Head of caudate nucleus (tissue), 42 donors: ENCODE measurements at regions of chr18 and their contacts with region 1.

Region 1: DNA sequence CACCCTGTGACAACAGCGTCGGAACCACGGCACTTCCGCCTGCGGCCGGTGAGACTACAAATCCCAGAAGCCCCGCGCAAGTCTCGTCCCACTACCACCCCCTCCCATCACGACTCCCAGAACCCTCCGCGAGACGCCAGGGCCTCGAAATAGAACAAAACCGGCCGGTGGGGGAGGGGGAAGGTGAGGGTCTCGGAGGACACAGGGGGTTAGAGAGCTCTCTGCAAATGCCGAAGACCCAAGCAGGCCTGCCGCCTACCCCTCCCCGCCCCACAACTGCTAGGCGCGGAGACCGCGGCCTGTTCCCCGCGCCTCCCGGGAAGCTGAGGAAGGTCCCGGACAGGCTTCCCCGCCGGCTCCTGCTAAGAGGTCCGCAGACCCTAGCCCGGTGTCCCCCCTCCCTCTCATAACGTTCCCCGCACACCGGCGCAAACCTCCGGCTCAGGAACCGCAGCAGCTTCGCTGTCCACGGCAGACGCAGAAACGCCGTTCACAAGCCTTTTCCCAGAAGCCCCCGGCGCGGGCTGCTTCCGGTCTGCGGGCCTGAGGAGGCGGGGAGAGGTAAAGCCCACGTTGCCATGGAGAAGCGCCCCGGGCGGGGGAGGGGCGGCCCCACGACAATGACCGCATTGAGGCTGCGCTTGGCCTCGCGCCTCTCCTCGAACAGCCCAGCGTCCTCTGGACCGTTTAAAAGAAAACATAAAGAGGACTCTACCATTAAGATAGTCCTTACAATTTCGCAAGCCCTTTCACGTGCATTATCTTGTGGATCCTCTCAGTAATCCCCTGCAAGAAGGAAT is at the start of gene ZNF24:
- DNase-seq: peak; percentile 94 to 99 (median 97)

Region 2: DNA sequence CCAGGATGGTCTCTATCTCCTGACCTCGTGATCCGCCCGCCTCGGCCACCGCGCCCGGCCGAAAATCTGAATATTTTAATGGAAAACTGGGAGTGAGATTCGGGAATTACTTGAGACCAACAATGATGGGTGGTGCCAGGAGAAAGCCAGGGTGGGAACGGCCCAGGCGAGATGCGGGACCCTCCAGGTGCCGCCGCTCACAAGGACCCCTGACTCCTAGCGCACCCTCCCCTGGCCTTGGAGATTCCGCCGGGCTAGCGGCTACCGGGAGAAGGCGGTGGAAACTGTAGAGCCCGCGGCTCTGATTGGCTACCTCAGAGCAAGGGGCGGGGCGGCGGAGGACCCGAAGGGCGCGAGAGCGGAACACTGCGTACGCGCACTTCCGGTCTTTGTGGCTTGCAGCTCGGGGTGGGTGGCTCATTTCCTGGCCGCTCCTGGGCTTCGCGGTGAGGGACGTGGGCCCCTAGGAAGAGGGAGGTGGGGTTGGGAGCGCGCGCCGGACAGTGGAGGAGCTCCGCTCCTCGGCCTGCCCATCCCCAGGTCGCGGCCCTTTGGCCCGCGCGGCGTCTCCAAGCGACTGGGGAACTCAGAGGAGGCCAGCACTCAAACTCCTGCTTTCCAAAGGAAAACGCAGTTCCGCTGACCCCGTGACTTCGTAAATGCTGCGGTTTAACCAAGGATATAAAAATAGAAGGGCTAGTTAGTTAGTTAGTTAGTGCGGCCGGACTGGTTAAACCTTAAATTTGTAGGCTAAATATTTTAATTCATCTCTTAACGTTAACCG is 103.3 kb before region 1 on chr18 and contains the start of gene ZNF397:
- intact Hi-C with region 1: loop called (anchors 2 kb)
- DNase-seq: peak; percentile 93 to 99 (median 98)

Region 3: DNA sequence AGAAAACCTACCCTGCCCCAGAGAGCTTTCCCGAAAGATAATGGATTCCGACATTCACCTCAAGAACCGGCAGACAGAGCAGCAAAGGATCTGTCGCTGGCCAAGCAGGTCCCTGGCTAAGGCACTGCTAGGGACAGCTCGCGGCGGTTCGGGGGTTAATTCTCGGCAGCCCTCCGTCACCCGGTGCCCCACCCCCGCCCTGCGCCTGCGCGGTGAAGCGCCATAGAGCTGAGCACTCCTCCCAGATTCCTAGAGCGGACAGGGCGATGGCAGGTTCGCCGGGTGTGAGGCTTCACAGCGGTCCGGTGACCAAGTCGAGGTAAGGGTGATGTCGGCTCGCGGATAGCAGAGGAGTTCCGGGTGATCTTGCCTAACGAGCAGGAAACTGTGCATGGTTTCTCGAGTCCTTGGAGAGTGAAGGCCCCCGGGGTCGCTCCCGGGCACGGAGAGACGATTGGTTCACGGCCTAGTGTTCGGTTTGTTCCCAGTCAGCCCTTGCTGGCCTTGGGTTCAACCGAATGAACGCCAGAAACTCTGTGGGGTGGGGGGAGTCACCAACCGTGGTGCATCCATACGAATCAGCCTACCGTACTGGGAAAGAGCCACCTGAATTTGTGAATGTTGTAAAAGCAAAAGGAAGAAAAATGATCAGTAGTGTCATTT is 53.9 kb before region 1 on chr18 and contains the start of gene ZSCAN30:
- intact Hi-C with region 1: loop called (anchors 1 kb)
- DNase-seq: peak; percentile 89 to 98 (median 95)